Activated CD4-positive, alpha-beta T cell treated with anti-CD3 and anti-CD28 coated beads, Interleukin-2, amount 10 ng/mL, durations not matched to agents 24 days and 14 days (primary cell): ENCODE measurements at regions of chr12 and their contacts with region 1.

Region 1: DNA sequence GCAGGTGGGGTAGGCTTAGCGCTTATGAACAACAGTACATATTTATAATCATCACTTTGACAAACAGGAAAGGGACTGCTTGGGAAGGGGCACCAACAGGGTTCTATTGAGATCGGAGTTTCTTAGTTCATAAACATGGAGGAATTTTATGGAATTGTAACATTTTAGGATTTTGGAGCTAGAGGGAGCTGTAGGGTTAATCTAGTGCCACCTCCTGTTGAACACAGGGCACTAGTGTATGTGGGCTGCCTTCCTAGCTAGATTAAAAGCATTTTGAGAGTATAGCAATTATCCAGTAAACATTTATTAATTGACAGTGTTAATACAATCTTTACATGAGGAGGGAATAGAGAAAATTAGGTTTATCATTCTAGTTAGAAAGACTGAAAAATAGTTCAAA is 23.1 kb upstream of the TBC1D30 start:
- DNase-seq: no peak
- H3K4me3 Mint-ChIP-seq: no peak overlapping the region
- H3K27ac Mint-ChIP-seq: no peak overlapping the region
- H3K4me1 Mint-ChIP-seq: no peaks in the 10 kb centered on the region
- H3K27me3 Mint-ChIP-seq: peaks cover 30% of the 10 kb centered on the region

Region 2: DNA sequence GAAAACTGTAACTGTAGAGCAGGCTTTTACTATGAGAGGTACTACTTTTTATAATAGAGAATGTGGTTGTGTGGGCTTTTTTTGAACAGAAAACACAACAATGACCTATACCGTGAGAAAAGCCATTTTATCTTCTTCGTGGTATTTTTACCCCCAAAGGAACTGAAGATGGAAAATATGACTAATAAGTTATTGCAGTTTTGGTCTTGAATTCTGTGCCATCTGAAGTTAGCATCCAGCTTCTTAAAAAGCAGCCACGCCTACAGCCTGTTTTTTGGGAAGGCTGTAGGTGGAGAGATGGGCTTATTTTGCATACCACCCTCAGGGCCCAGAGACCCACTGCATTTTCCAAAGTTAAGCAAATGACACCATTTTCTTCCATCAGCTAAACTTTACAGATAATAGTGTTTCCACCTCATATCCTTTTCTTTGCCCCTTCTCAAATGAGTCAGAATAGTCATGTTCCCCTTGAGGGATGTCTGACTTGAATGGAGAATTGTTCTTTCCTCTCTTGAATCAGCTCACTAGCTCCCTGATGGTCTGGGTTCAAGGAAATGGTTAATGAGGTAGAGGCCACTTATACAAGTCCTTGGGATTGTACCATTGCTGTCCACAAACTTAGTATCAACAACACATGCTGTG is 76.1 kb after region 1 on chr12:
- intact Hi-C with region 1: loop called (anchors 5 kb)
- DNase-seq: no peak
- H3K4me3 Mint-ChIP-seq: no peak overlapping the region
- H3K27ac Mint-ChIP-seq: peak overlapping the region; percentile 65
- H3K4me1 Mint-ChIP-seq: peaks cover 13% of the 10 kb centered on the region
- H3K27me3 Mint-ChIP-seq: no peaks in the 10 kb centered on the region